ENCODE measurements at regions of chr9 and their contacts with region 1.

Region 1: GRCh38 chr9:19184144-19184917 is 46.2 kb upstream of the DENND4C start:
- DNase-seq: peak; percentile 57 to 90 (median 73)
- H3K4me3 ChIP-seq: no peak overlapping the region
- H3K4me3 Mint-ChIP-seq: peak overlapping the region in 7 of 8 donors; percentile 26 to 73 (median 51)
- H3K27ac ChIP-seq: peak overlapping the region; percentile 60
- H3K27ac Mint-ChIP-seq: peak overlapping the region; percentile 89 to 97 (median 95)
- H3K4me1 ChIP-seq: peaks cover 22% of the 10 kb centered on the region
- H3K4me1 Mint-ChIP-seq: peaks cover 9 to 20% (median 15%) of the 10 kb centered on the region in 4 donors
- H3K27me3 ChIP-seq: no peaks in the 10 kb centered on the region
- H3K27me3 Mint-ChIP-seq: no peaks in the 10 kb centered on the region

Region 2: GRCh38 chr9:19085295-19085694 is 99.0 kb before region 1 on chr9:
- CTCF ChIA-PET with region 1: interaction called, 192 read pairs
- POLR2A ChIA-PET with region 1: no interaction called
- intact Hi-C with region 1: no loop called
- DNase-seq: peak in 4 of 5 donors; percentile 49 to 65 (median 54)
- H3K4me3 ChIP-seq: no peak overlapping the region
- H3K4me3 Mint-ChIP-seq: no peak overlapping the region
- H3K27ac ChIP-seq: no peak overlapping the region
- H3K27ac Mint-ChIP-seq: peak overlapping the region in 2 of 7 donors; percentile 19 to 58
- H3K4me1 ChIP-seq: no peaks in the 10 kb centered on the region
- H3K4me1 Mint-ChIP-seq: peaks cover 0 to 4% (median 3%) of the 10 kb centered on the region in 4 donors
- H3K27me3 ChIP-seq: no peaks in the 10 kb centered on the region
- H3K27me3 Mint-ChIP-seq: no peaks in the 10 kb centered on the region

Region 3: GRCh38 chr9:19116107-19116790 is 68.1 kb before region 1 on chr9:
- CTCF ChIA-PET with region 1: no interaction called
- POLR2A ChIA-PET with region 1: no interaction called
- intact Hi-C with region 1: no loop called
- DNase-seq: no peak
- H3K4me3 ChIP-seq: no peak overlapping the region
- H3K4me3 Mint-ChIP-seq: no peak overlapping the region
- H3K27ac ChIP-seq: no peak overlapping the region
- H3K27ac Mint-ChIP-seq: no peak overlapping the region
- H3K4me1 ChIP-seq: no peaks in the 10 kb centered on the region
- H3K4me1 Mint-ChIP-seq: peaks cover 0 to 16% (median 9%) of the 10 kb centered on the region in 4 donors
- H3K27me3 ChIP-seq: no peaks in the 10 kb centered on the region
- H3K27me3 Mint-ChIP-seq: no peaks in the 10 kb centered on the region

Region 4: DNA sequence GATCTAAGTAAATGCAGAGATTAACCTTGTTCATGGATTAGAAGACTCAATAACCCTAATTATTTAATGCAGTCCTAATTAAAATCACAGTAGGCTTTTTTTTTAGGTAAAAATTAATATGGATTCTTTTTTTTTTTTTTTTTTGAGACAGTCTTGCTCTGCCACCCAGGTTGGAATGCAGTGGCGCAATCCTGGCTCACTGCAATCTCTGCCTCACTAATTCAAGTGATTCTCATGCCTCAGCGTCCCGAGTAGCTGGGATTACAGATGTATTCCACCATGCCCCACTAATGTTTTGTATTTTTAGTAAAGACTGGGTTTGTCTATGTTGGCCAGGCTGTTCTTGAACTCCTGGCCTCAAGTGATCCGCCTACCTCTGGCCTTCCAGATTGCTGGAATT is 86.7 kb after region 1 on chr9:
- CTCF ChIA-PET with region 1: no interaction called
- POLR2A ChIA-PET with region 1: no interaction called
- intact Hi-C with region 1: no loop called
- DNase-seq: no peak
- H3K4me3 ChIP-seq: no peak overlapping the region
- H3K4me3 Mint-ChIP-seq: no peak overlapping the region
- H3K27ac ChIP-seq: no peak overlapping the region
- H3K27ac Mint-ChIP-seq: no peak overlapping the region
- H3K4me1 ChIP-seq: peaks cover 25% of the 10 kb centered on the region
- H3K4me1 Mint-ChIP-seq: peaks cover 25 to 62% (median 47%) of the 10 kb centered on the region in 4 donors
- H3K27me3 ChIP-seq: no peaks in the 10 kb centered on the region
- H3K27me3 Mint-ChIP-seq: no peaks in the 10 kb centered on the region

Region 5: DNA sequence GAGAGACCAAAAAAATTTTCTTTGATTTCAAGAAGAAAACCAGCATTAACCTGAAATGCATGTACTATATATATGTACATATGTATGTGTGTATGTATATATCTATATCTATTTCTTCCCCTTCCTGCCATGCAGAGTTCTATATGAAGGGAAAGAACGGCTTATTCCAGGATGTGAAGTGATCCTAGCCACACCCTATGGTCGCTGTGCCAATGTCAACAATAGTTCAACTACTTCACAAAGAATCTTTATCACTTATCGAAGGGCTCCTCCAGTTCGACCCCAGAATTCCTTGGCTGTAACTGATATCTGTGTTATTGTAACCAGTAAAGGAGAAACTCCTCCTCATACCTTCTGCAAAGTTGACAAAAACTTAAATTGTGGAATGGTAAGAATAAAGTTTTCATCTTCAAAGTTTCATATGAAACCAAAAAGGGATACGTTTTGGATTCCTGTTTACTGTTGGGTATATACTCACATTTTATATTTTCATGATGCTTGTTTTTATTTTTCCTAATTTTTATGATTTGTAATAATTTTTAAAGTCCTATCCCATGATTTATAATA is 102.4 kb after region 1 on chr9:
- CTCF ChIA-PET with region 1: no interaction called
- POLR2A ChIA-PET with region 1: no interaction called
- intact Hi-C with region 1: loop called (anchors 5 kb)
- DNase-seq: no peak
- H3K4me3 ChIP-seq: no peak overlapping the region
- H3K4me3 Mint-ChIP-seq: no peak overlapping the region
- H3K27ac ChIP-seq: no peak overlapping the region
- H3K27ac Mint-ChIP-seq: no peak overlapping the region
- H3K4me1 ChIP-seq: peaks cover 6% of the 10 kb centered on the region
- H3K4me1 Mint-ChIP-seq: peaks cover 18 to 34% (median 23%) of the 10 kb centered on the region in 4 donors
- H3K27me3 ChIP-seq: no peaks in the 10 kb centered on the region
- H3K27me3 Mint-ChIP-seq: no peaks in the 10 kb centered on the region

Region 6: DNA sequence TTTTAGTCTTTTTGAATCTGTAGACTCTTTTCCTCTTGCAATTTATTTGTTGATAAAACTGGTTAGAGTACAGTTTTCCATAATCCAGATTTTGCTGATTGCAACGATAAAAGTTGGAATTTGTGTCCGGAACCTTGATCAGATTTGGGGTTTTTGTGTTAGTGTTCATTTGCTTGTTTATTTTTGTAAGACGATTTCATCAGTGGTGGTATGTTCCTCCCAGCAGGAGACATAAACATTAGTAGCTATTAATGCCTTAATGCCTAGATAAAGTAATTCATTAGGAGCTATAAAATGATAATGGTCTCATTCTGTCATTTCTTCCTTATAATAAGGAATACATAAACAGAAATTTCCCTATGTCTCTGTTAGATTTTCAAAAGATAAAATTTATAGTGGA is 174.4 kb after region 1 on chr9:
- CTCF ChIA-PET with region 1: no interaction called
- POLR2A ChIA-PET with region 1: no interaction called
- intact Hi-C with region 1: no loop called
- DNase-seq: no peak
- H3K4me3 ChIP-seq: no peak overlapping the region
- H3K4me3 Mint-ChIP-seq: no peak overlapping the region
- H3K27ac ChIP-seq: no peak overlapping the region
- H3K27ac Mint-ChIP-seq: peak overlapping the region in 4 of 7 donors; percentile 1 to 44 (median 38)
- H3K4me1 ChIP-seq: no peaks in the 10 kb centered on the region
- H3K4me1 Mint-ChIP-seq: peaks cover 0 to 1% (median 0%) of the 10 kb centered on the region in 4 donors
- H3K27me3 ChIP-seq: no peaks in the 10 kb centered on the region
- H3K27me3 Mint-ChIP-seq: no peaks in the 10 kb centered on the region

Region 7: GRCh38 chr9:19408693-19409400 is 224.5 kb after region 1 on chr9 and contains the start of gene ACER2:
- CTCF ChIA-PET with region 1: no interaction called
- POLR2A ChIA-PET with region 1: interaction called, 3 read pairs
- intact Hi-C with region 1: loop called (anchors 5 kb)
- DNase-seq: peak; percentile 91 to 97 (median 93)
- H3K4me3 ChIP-seq: peak within 1 kb of the TSS; percentile 94 to 100
- H3K4me3 Mint-ChIP-seq: peak within 1 kb of the TSS; percentile 91 to 96 (median 96)
- H3K27ac ChIP-seq: peak within 1 kb of the TSS; percentile 69
- H3K27ac Mint-ChIP-seq: peak within 1 kb of the TSS; percentile 65 to 94 (median 90)
- H3K4me1 ChIP-seq: peaks cover 23% of the 10 kb centered on the region
- H3K4me1 Mint-ChIP-seq: peaks cover 5 to 24% (median 16%) of the 10 kb centered on the region in 4 donors
- H3K27me3 ChIP-seq: no peaks in the 10 kb centered on the region
- H3K27me3 Mint-ChIP-seq: no peaks in the 10 kb centered on the region
- total RNA-seq, gene ACER2: 5.9 to 6.0 TPM

Region 8: GRCh38 chr9:19666575-19666974 is 482.2 kb after region 1 on chr9:
- CTCF ChIA-PET with region 1: no interaction called
- POLR2A ChIA-PET with region 1: no interaction called
- intact Hi-C with region 1: no loop called
- DNase-seq: no peak
- H3K4me3 ChIP-seq: no peak overlapping the region
- H3K4me3 Mint-ChIP-seq: no peak overlapping the region
- H3K27ac ChIP-seq: no peak overlapping the region
- H3K27ac Mint-ChIP-seq: no peak overlapping the region
- H3K4me1 ChIP-seq: no peaks in the 10 kb centered on the region
- H3K4me1 Mint-ChIP-seq: peaks cover 0 to 4% (median 0%) of the 10 kb centered on the region in 4 donors
- H3K27me3 ChIP-seq: no peaks in the 10 kb centered on the region
- H3K27me3 Mint-ChIP-seq: peaks cover 0 to 7% of the 10 kb centered on the region in 2 donors